Naive thymus-derived CD4-positive, alpha-beta T cell (primary cell): ENCODE measurements at regions of chr6 and their contacts with region 1.

Region 1: GRCh38 chr6:24581084-24581669 is 64.8 kb downstream of the KIAA0319 start:
- DNase-seq: peak; percentile 44 to 73 (median 65)
- ATAC-seq: peak; percentile 92
- H3K4me3 ChIP-seq: no peak overlapping the region
- H3K4me3 Mint-ChIP-seq: no peak overlapping the region
- H3K27ac ChIP-seq: no peak overlapping the region
- H3K27ac Mint-ChIP-seq: peak overlapping the region in 2 of 9 donors; percentile 1 to 31
- H3K4me1 ChIP-seq: peaks cover 0 to 5% of the 10 kb centered on the region in 2 donors
- H3K4me1 Mint-ChIP-seq: peaks cover 3 to 13% (median 5%) of the 10 kb centered on the region in 7 donors
- H3K27me3 ChIP-seq: no peaks in the 10 kb centered on the region
- H3K27me3 Mint-ChIP-seq: peaks cover 0 to 31% (median 0%) of the 10 kb centered on the region in 5 donors

Region 2: DNA sequence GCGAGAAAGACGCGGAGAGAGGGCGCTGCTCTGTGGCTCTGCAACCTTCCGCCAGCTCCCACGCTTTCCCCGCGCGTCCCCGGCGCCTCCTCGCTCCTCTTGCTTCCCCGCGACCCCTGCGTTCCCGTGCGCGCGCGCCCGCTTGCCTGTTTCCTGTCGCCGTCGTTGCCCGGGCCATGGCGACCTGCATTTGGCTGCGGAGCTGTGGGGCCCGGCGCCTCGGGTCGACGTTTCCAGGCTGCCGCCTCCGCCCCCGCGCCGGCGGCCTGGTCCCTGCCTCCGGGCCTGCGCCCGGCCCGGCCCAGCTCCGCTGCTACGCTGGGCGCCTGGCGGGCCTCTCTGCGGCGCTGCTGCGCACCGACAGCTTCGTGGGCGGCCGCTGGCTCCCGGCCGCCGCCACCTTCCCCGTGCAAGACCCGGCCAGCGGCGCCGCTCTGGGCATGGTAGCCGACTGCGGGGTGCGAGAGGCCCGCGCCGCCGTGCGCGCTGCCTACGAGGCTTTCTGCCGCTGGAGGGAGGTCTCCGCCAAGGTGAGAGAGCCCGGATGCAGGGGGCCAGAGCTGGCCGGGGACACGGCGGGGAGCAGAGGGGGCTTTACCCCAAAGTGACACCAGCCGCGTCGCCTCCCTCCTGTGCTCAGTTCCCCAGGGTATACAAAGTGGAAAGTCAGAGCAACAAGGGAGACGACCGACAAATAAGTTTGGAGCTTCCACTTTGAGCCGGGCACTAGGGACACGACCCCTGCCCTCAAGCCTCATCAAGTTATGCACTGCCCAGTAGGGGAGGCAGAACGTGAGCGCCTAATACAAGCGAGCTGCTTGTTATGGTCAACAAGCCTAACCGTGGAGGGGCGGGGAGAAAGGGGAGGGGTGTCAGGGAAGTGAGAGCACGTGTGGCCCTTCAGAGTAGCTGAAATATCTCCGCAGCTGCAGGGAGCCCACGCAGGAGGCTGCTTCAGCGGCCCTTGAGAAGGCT is 86.1 kb before region 1 on chr6 and contains the start of gene ALDH5A1:
- CTCF ChIA-PET with region 1: interaction called, 8 read pairs
- POLR2A ChIA-PET with region 1: no interaction called
- intact Hi-C with region 1: loop called in 1 of 2 experiments (anchors 1 kb)
- DNase-seq: peak; percentile 63 to 86 (median 84)
- ATAC-seq: peak; percentile 89
- H3K4me3 ChIP-seq: peak within 1 kb of the TSS; percentile 74
- H3K4me3 Mint-ChIP-seq: peak within 1 kb of the TSS; percentile 84 to 91 (median 88)
- H3K27ac ChIP-seq: peak within 1 kb of the TSS; percentile 63
- H3K27ac Mint-ChIP-seq: peak within 1 kb of the TSS; percentile 30 to 88 (median 74)
- H3K4me1 ChIP-seq: peaks cover 12 to 15% of the 10 kb centered on the region in 2 donors
- H3K4me1 Mint-ChIP-seq: peaks cover 13 to 50% (median 31%) of the 10 kb centered on the region in 7 donors
- H3K27me3 ChIP-seq: no peaks in the 10 kb centered on the region
- H3K27me3 Mint-ChIP-seq: peaks cover 0 to 2% (median 0%) of the 10 kb centered on the region in 5 donors
- total RNA-seq, gene ALDH5A1: 5.7 to 20.6 (median 8.9) TPM

Region 3: DNA sequence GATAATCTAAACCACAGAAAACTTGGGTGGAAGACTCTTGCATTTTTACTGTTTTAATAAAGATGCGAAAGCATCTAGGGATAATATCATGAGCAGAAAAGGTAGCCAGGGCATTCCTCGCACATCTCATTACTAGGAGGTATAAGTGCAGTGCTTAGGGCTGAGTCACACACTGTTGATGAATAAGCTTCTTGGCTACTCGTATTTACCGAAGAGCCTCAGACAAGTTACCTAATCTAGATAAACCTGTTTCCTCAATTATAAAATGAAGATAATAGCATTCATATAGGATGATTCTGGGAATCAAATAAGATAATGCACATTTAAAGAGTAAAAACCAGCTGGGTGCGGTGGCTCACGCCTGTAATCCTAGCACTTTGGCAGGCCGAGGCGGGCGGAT is 65.6 kb after region 1 on chr6:
- CTCF ChIA-PET with region 1: no interaction called
- POLR2A ChIA-PET with region 1: no interaction called
- intact Hi-C with region 1: loop called (anchors 5 kb)
- DNase-seq: no peak
- ATAC-seq: no peak
- H3K4me3 ChIP-seq: no peak overlapping the region
- H3K4me3 Mint-ChIP-seq: peak overlapping the region; percentile 82 to 98 (median 88)
- H3K27ac ChIP-seq: peak overlapping the region; percentile 16
- H3K27ac Mint-ChIP-seq: peak overlapping the region in 6 of 9 donors; percentile 31 to 94 (median 70)
- H3K4me1 ChIP-seq: peaks cover 0 to 12% of the 10 kb centered on the region in 2 donors
- H3K4me1 Mint-ChIP-seq: peaks cover 6 to 23% (median 12%) of the 10 kb centered on the region in 7 donors
- H3K27me3 ChIP-seq: peaks cover 0 to 5% of the 10 kb centered on the region in 2 donors
- H3K27me3 Mint-ChIP-seq: peaks cover 1 to 27% (median 21%) of the 10 kb centered on the region in 5 donors

Region 4: GRCh38 chr6:24699521-24700359 is 118.6 kb after region 1 on chr6:
- CTCF ChIA-PET with region 1: interaction called, 14 read pairs
- POLR2A ChIA-PET with region 1: interaction called, 8 read pairs
- intact Hi-C with region 1: loop called (anchors 1 kb)
- DNase-seq: no peak
- ATAC-seq: no peak
- H3K4me3 ChIP-seq: no peak overlapping the region
- H3K4me3 Mint-ChIP-seq: no peak overlapping the region
- H3K27ac ChIP-seq: no peak overlapping the region
- H3K27ac Mint-ChIP-seq: peak overlapping the region in 8 of 9 donors; percentile 14 to 68 (median 30)
- H3K4me1 ChIP-seq: no peaks in the 10 kb centered on the region
- H3K4me1 Mint-ChIP-seq: peaks cover 8 to 28% (median 17%) of the 10 kb centered on the region in 7 donors
- H3K27me3 ChIP-seq: no peaks in the 10 kb centered on the region
- H3K27me3 Mint-ChIP-seq: no peaks in the 10 kb centered on the region

Region 5: GRCh38 chr6:24831771-24832716 is 250.9 kb after region 1 on chr6:
- CTCF ChIA-PET with region 1: no interaction called
- POLR2A ChIA-PET with region 1: no interaction called
- intact Hi-C with region 1: no loop called
- DNase-seq: no peak
- ATAC-seq: no peak
- H3K4me3 ChIP-seq: no peak overlapping the region
- H3K4me3 Mint-ChIP-seq: peak overlapping the region in 1 of 10 donors; percentile 51
- H3K27ac ChIP-seq: no peak overlapping the region
- H3K27ac Mint-ChIP-seq: peak overlapping the region; percentile 38 to 90 (median 81)
- H3K4me1 ChIP-seq: no peaks in the 10 kb centered on the region
- H3K4me1 Mint-ChIP-seq: peaks cover 7 to 71% (median 60%) of the 10 kb centered on the region in 7 donors
- H3K27me3 ChIP-seq: no peaks in the 10 kb centered on the region
- H3K27me3 Mint-ChIP-seq: no peaks in the 10 kb centered on the region

Region 6: GRCh38 chr6:24855395-24856245 is 274.4 kb after region 1 on chr6:
- CTCF ChIA-PET with region 1: no interaction called
- POLR2A ChIA-PET with region 1: no interaction called
- intact Hi-C with region 1: loop called in 1 of 2 experiments (anchors 5 kb)
- DNase-seq: peak; percentile 25 to 83 (median 74)
- ATAC-seq: peak; percentile 78
- H3K4me3 ChIP-seq: no peak overlapping the region
- H3K4me3 Mint-ChIP-seq: peak overlapping the region in 8 of 10 donors; percentile 48 to 89 (median 62)
- H3K27ac ChIP-seq: peak overlapping the region; percentile 72
- H3K27ac Mint-ChIP-seq: peak overlapping the region; percentile 86 to 99 (median 94)
- H3K4me1 ChIP-seq: peaks cover 47 to 59% of the 10 kb centered on the region in 2 donors
- H3K4me1 Mint-ChIP-seq: peaks cover 51 to 72% (median 66%) of the 10 kb centered on the region in 7 donors
- H3K27me3 ChIP-seq: no peaks in the 10 kb centered on the region
- H3K27me3 Mint-ChIP-seq: no peaks in the 10 kb centered on the region